B cell (primary cell): ENCODE measurements at regions of chr11 and their contacts with region 1.

Region 1: DNA sequence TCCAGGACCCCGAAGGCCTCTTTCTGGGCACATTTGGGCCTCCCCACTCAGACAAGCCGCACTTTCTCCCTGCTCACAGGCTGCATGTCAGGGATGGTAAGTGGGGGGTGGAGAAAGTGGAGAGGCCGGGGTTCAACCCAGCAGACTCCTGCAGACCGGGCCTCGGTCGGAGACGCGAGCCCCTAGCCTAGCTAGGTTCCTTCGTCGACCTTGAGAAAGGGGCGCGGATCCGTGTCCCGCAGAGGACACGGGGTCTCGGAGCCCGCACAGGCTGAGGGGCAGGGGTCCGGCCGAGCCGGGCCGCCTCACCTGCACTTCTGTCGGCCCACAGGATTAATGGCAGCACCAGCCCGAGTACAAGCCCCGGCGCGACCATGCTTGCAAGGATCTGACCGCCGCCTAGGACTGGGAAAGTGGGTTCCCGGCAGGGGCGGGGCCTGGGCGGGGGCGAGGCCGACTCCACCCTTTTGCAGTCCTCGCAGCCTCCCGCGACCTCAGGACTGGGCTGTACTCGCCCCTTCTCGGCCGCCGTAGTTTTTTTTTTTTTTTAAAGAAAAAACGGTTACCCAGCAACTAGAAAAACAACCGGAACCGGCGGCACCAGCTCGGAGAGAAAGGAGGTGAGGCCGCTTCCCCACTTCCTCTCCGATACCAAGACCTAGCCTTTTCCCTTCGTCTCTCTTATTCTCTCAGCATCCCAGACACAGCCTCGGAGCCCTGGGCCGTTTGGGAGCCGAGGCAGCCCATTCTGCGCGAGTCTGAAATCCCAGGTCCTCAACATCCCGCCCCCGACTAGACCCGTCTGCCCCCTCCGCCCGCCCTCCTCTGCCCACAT is at the starts of genes SIAE and SPA17:
- DNase-seq: peak; percentile 96
- ATAC-seq: peak; percentile 93
- H3K4me3 ChIP-seq: peak within 1 kb of the TSS; percentile 46 to 93 (median 75)
- H3K4me3 Mint-ChIP-seq: peak within 1 kb of the TSS; percentile 94
- H3K27ac ChIP-seq: peak within 1 kb of the TSS; percentile 73 to 90
- H3K27ac Mint-ChIP-seq: peak within 1 kb of the TSS; percentile 96
- H3K4me1 ChIP-seq: peaks cover 23 to 32% of the 10 kb centered on the region in 2 donors
- H3K4me1 Mint-ChIP-seq: peaks cover 25% of the 10 kb centered on the region
- H3K27me3 ChIP-seq: no peaks in the 10 kb centered on the region
- H3K27me3 Mint-ChIP-seq: no peaks in the 10 kb centered on the region
- CTCF ChIP-seq: no peak
- total RNA-seq, gene SIAE: 3.6 and 5.1 TPM in 2 replicates
- total RNA-seq, gene SPA17: 0.46 and 0.76 TPM in 2 replicates

Region 2: GRCh38 chr11:124644426-124645280 is 28.9 kb before region 1 on chr11:
- CTCF ChIA-PET with region 1: interaction called, 20 read pairs
- POLR2A ChIA-PET with region 1: no interaction called
- intact Hi-C with region 1: no loop called
- DNase-seq: peak; percentile 67
- ATAC-seq: peak; percentile 83
- H3K4me3 ChIP-seq: no peak overlapping the region
- H3K4me3 Mint-ChIP-seq: peak overlapping the region; percentile 2
- H3K27ac ChIP-seq: no peak overlapping the region
- H3K27ac Mint-ChIP-seq: no peak overlapping the region
- H3K4me1 ChIP-seq: peaks cover 14 to 16% of the 10 kb centered on the region in 2 donors
- H3K4me1 Mint-ChIP-seq: peaks cover 16% of the 10 kb centered on the region
- H3K27me3 ChIP-seq: no peaks in the 10 kb centered on the region
- H3K27me3 Mint-ChIP-seq: no peaks in the 10 kb centered on the region
- CTCF ChIP-seq: peak; percentile 82

Region 3: GRCh38 chr11:124724979-124725718 is 51.6 kb after region 1 on chr11:
- CTCF ChIA-PET with region 1: interaction called, 5 read pairs
- POLR2A ChIA-PET with region 1: no interaction called
- intact Hi-C with region 1: loop called (anchors 5 kb)
- DNase-seq: peak; percentile 33
- ATAC-seq: peak; percentile 85
- H3K4me3 ChIP-seq: peak overlapping the region in 3 of 5 experiments; percentile 5 to 45 (median 25)
- H3K4me3 Mint-ChIP-seq: peak overlapping the region; percentile 75
- H3K27ac ChIP-seq: no peak overlapping the region
- H3K27ac Mint-ChIP-seq: no peak overlapping the region
- H3K4me1 ChIP-seq: peaks cover 36 to 39% of the 10 kb centered on the region in 2 donors
- H3K4me1 Mint-ChIP-seq: peaks cover 60% of the 10 kb centered on the region
- H3K27me3 ChIP-seq: peaks cover 0 to 13% (median under 1%) of the 10 kb centered on the region in 4 experiments
- H3K27me3 Mint-ChIP-seq: peaks cover 31% of the 10 kb centered on the region
- CTCF ChIP-seq: no peak

Region 4: GRCh38 chr11:124753205-124753604 is 79.7 kb after region 1 on chr11:
- CTCF ChIA-PET with region 1: interaction called, 25 read pairs
- POLR2A ChIA-PET with region 1: interaction called, 4 read pairs
- intact Hi-C with region 1: no loop called
- DNase-seq: no peak
- ATAC-seq: no peak
- H3K4me3 ChIP-seq: no peak overlapping the region
- H3K4me3 Mint-ChIP-seq: no peak overlapping the region
- H3K27ac ChIP-seq: no peak overlapping the region
- H3K27ac Mint-ChIP-seq: no peak overlapping the region
- H3K4me1 ChIP-seq: peaks cover 25 to 34% of the 10 kb centered on the region in 2 donors
- H3K4me1 Mint-ChIP-seq: peaks cover 26% of the 10 kb centered on the region
- H3K27me3 ChIP-seq: peaks cover 0 to 2% (median 0%) of the 10 kb centered on the region in 4 experiments
- H3K27me3 Mint-ChIP-seq: peaks cover 7% of the 10 kb centered on the region
- CTCF ChIP-seq: no peak

Region 5: DNA sequence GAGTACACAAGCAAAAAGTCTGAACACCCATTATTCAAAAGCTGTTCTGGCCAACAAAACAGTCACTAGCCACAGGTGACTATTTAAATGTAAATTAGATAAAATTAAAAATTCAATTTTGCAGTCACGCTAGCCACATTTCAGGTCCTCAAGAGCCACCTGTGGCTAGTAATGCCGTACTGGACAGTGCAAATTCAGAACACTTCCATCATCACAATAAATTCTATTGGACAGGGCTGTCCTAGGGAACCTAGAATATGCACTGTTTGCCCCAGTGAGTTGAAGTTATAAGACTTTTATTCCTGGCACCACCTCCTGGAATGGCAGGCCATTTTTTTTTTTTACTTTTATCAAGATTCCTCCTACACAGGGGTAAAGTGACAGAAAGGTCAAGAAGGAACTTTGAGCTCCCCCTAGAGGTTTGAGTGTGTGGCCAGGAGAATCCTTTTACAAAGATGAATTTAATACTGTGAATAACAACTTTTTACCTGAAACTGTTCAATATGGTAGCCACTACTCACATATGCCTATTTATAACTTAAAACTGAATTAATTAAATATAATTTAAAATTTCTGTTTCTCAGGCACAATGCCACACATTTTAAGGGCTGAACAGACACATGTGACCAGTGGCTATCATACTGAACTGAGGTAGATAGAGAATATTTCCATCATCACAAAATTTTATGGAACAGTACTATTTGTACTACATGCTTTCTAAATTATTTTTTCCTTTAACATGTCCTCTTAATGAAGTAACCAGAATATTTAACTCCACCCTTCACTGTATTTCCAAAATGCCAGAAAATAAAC is 120.1 kb after region 1 on chr11:
- CTCF ChIA-PET with region 1: interaction called, 177 read pairs
- POLR2A ChIA-PET with region 1: interaction called, 8 read pairs
- intact Hi-C with region 1: loop called (anchors 1 kb)
- DNase-seq: peak; percentile 67
- ATAC-seq: no peak
- H3K4me3 ChIP-seq: no peak overlapping the region
- H3K4me3 Mint-ChIP-seq: no peak overlapping the region
- H3K27ac ChIP-seq: no peak overlapping the region
- H3K27ac Mint-ChIP-seq: no peak overlapping the region
- H3K4me1 ChIP-seq: peaks cover 3 to 8% of the 10 kb centered on the region in 2 donors
- H3K4me1 Mint-ChIP-seq: peaks cover 21% of the 10 kb centered on the region
- H3K27me3 ChIP-seq: no peaks in the 10 kb centered on the region
- H3K27me3 Mint-ChIP-seq: no peaks in the 10 kb centered on the region
- CTCF ChIP-seq: peak; percentile 78

Region 6: GRCh38 chr11:124837491-124837856 is 163.9 kb after region 1 on chr11:
- CTCF ChIA-PET with region 1: interaction called, 155 read pairs
- POLR2A ChIA-PET with region 1: no interaction called
- intact Hi-C with region 1: loop called (anchors 1 kb)
- DNase-seq: peak; percentile 43
- ATAC-seq: no peak
- H3K4me3 ChIP-seq: no peak overlapping the region
- H3K4me3 Mint-ChIP-seq: no peak overlapping the region
- H3K27ac ChIP-seq: no peak overlapping the region
- H3K27ac Mint-ChIP-seq: no peak overlapping the region
- H3K4me1 ChIP-seq: peaks cover 24 to 30% of the 10 kb centered on the region in 2 donors
- H3K4me1 Mint-ChIP-seq: peaks cover 18% of the 10 kb centered on the region
- H3K27me3 ChIP-seq: peaks cover 0 to 53% (median 42%) of the 10 kb centered on the region in 4 experiments
- H3K27me3 Mint-ChIP-seq: peaks cover 62% of the 10 kb centered on the region
- CTCF ChIP-seq: no peak